ENCODE measurements at regions of chr6 and their contacts with region 1.

Region 1: DNA sequence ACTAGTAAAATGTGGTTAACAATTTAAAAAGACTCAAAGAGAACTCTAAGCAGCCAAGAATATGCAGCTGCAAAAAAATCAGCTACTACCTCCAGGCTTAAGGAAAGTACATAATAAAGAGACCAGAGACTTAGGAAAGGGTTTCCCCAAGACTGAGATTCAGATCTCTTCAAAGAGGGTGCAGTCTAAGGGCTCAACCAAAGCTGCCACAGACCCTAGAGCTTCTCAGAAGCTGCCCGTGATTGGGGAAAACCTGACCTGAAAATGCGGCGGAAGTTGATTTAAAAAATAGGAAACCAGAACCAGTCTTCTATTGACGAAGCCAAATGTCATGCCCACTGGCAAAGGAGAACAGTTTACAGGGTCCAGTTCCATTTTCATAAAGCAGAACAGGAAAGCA is 516.8 kb upstream of the MARCKS start:
- DNase-seq: no peak
- ATAC-seq: no peak
- H3K4me3 ChIP-seq: no peak overlapping the region
- H3K4me3 Mint-ChIP-seq: no peak overlapping the region
- H3K27ac ChIP-seq: no peak overlapping the region
- H3K27ac Mint-ChIP-seq: no peak overlapping the region
- H3K4me1 ChIP-seq: no peaks in the 10 kb centered on the region
- H3K4me1 Mint-ChIP-seq: no peaks in the 10 kb centered on the region
- H3K27me3 ChIP-seq: no peaks in the 10 kb centered on the region
- H3K27me3 Mint-ChIP-seq: no peaks in the 10 kb centered on the region

Region 2: GRCh38 chr6:113558966-113559365 is 218.6 kb after region 1 on chr6:
- CTCF ChIA-PET with region 1: interaction called in 1 of 2 experiments, 10 read pairs
- POLR2A ChIA-PET with region 1: no interaction called
- DNase-seq: no peak
- ATAC-seq: no peak
- H3K4me3 ChIP-seq: no peak overlapping the region
- H3K4me3 Mint-ChIP-seq: no peak overlapping the region
- H3K27ac ChIP-seq: no peak overlapping the region
- H3K27ac Mint-ChIP-seq: no peak overlapping the region
- H3K4me1 ChIP-seq: no peaks in the 10 kb centered on the region
- H3K4me1 Mint-ChIP-seq: no peaks in the 10 kb centered on the region
- H3K27me3 ChIP-seq: no peaks in the 10 kb centered on the region
- H3K27me3 Mint-ChIP-seq: peaks cover 0 to 3% of the 10 kb centered on the region in 2 donors

Region 3: DNA sequence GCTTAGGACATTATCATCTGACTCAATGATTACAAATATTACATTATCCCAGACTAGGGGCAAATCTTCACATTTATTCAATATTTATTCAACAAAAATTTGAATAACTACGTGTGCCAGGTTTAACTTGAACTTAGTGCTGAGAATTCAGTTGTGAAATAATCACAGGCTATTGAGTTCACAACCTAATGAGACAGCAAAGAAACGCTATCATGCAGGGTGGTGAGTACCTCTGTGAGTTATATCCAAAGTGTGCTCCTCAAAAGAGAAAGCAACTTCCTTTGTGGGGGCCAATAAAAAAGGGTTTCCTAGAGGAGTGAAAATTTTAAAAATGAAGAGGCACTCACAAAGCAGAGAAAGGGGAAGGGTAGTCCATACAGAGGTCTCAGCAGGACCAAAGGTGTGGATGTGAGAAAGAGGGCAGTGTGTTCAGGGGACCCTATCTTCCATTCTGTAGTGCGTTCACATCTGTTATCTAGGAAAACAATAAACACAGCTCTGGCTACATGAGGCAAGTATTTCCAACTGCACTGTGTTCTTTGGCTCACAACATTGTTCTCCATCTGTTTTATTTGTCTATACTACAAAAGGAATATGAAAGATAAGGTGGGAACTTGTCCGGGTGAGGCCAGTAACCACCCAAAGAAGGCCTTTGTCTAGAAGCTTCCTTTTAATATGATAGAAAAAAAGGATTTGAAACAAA is 361.3 kb after region 1 on chr6:
- CTCF ChIA-PET with region 1: no interaction called
- POLR2A ChIA-PET with region 1: no interaction called
- DNase-seq: no peak
- ATAC-seq: no peak
- H3K4me3 ChIP-seq: no peak overlapping the region
- H3K4me3 Mint-ChIP-seq: no peak overlapping the region
- H3K27ac ChIP-seq: no peak overlapping the region
- H3K27ac Mint-ChIP-seq: no peak overlapping the region
- H3K4me1 ChIP-seq: no peaks in the 10 kb centered on the region
- H3K4me1 Mint-ChIP-seq: no peaks in the 10 kb centered on the region
- H3K27me3 ChIP-seq: no peaks in the 10 kb centered on the region
- H3K27me3 Mint-ChIP-seq: no peaks in the 10 kb centered on the region